ENCODE measurements at regions of chr10 and their contacts with region 1.

Region 1: DNA sequence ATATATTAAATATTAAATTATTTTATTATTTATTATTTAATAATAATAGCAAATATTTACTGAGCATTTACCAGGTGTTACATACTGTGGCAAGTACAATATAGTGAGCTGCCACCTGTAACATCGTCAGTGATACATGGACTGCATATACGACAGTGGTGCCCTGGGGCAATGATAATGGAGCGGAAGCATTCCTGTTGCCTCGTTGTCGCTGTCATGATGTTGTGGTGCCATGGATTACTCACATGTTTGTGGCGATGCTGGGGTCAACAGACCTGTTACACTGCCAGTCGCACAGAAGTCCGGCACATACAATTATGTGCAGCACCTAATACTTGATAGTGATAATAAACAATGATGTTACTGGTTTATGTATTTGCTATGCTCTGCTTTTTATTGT is 20.6 kb downstream of the CAMK1D start:
- DNase-seq: no peak
- ATAC-seq: no peak
- H3K4me3 ChIP-seq: no peak overlapping the region
- H3K4me3 Mint-ChIP-seq: no peak overlapping the region
- H3K27ac ChIP-seq: no peak overlapping the region
- H3K27ac Mint-ChIP-seq: no peak overlapping the region
- H3K4me1 ChIP-seq: peaks cover 19% of the 10 kb centered on the region
- H3K4me1 Mint-ChIP-seq: peaks cover 15 to 16% of the 10 kb centered on the region in 2 donors
- H3K27me3 ChIP-seq: no peaks in the 10 kb centered on the region
- H3K27me3 Mint-ChIP-seq: no peaks in the 10 kb centered on the region
- CTCF ChIP-seq: no peak

Region 2: GRCh38 chr10:12412666-12413368 is 42.8 kb after region 1 on chr10:
- intact Hi-C with region 1: loop called (anchors 5 kb)
- DNase-seq: peak; percentile 26 to 68
- ATAC-seq: peak; percentile 77 to 89 (median 79)
- H3K4me3 ChIP-seq: no peak overlapping the region
- H3K4me3 Mint-ChIP-seq: no peak overlapping the region
- H3K27ac ChIP-seq: no peak overlapping the region
- H3K27ac Mint-ChIP-seq: peak overlapping the region in 1 of 2 donors; percentile 62
- H3K4me1 ChIP-seq: peaks cover 8% of the 10 kb centered on the region
- H3K4me1 Mint-ChIP-seq: peaks cover 25 to 26% of the 10 kb centered on the region in 2 donors
- H3K27me3 ChIP-seq: no peaks in the 10 kb centered on the region
- H3K27me3 Mint-ChIP-seq: no peaks in the 10 kb centered on the region
- CTCF ChIP-seq: no peak

Region 3: DNA sequence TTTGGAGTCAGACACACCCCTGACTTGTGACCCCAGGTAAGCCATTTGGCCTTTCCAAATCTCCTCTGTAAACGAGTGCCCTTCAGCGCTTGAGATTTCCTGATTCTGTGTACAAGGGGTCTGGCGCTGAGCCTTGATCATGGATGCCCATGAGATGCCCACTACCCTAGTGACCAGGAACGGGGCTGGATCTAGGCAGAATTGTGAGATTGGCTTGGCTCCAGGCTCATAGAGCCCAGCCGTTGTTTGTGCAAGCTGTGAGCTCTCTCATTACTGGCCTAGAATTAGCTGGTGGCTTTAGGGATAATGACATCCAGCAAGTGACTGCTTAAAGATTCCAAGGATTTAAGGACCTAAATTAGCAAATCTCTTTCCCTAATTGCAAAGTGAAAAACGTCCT is 64.3 kb after region 1 on chr10:
- intact Hi-C with region 1: no loop called
- DNase-seq: no peak
- ATAC-seq: no peak
- H3K4me3 ChIP-seq: no peak overlapping the region
- H3K4me3 Mint-ChIP-seq: no peak overlapping the region
- H3K27ac ChIP-seq: no peak overlapping the region
- H3K27ac Mint-ChIP-seq: no peak overlapping the region
- H3K4me1 ChIP-seq: no peaks in the 10 kb centered on the region
- H3K4me1 Mint-ChIP-seq: peaks cover 22 to 36% of the 10 kb centered on the region in 2 donors
- H3K27me3 ChIP-seq: no peaks in the 10 kb centered on the region
- H3K27me3 Mint-ChIP-seq: no peaks in the 10 kb centered on the region
- CTCF ChIP-seq: no peak

Measured in natural killer cell (primary cell).